ENCODE measurements at regions of chr22 and their contacts with region 1.

Region 1: GRCh38 chr22:39773976-39774539 is 119.5 kb downstream of the ENTHD1 start:
- DNase-seq: no peak
- ATAC-seq: no peak
- H3K4me3 ChIP-seq: no peak overlapping the region
- H3K27ac ChIP-seq: no peak overlapping the region
- H3K4me1 ChIP-seq: no peaks in the 10 kb centered on the region
- H3K27me3 ChIP-seq: peaks cover 4% of the 10 kb centered on the region; the same call in 1 of the 2 replicates
- CTCF ChIP-seq: no peak

Region 2: DNA sequence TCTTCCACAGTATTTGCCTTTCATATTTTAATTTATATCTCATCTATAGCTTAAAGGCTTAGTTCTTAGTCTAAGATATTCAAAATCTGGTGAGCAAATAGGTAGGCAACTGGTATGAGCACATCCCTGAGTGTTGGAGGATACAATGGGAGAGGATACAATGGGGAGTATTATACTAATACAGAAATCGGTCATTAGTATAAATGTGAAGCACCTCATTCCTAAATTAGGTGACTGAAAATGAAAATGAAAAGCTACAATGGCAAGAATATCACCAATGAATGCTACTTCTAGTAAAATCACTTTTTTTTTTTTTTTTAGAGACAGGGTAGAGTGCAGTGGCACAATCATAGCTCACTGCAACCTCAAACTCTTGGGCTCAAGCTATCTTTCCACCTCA is 98.5 kb after region 1 on chr22:
- CTCF ChIA-PET with region 1: no interaction called
- POLR2A ChIA-PET with region 1: interaction called, 10 read pairs
- in situ Hi-C with region 1: no loop called
- intact Hi-C with region 1: no loop called
- DNase-seq: no peak
- ATAC-seq: no peak
- H3K4me3 ChIP-seq: no peak overlapping the region
- H3K27ac ChIP-seq: no peak overlapping the region
- H3K4me1 ChIP-seq: no peaks in the 10 kb centered on the region
- H3K27me3 ChIP-seq: peaks cover 8% of the 10 kb centered on the region
- CTCF ChIP-seq: no peak

Measured in Panc1 (cell line).